ENCODE measurements at regions of chr10 and their contacts with region 1.

Region 1: DNA sequence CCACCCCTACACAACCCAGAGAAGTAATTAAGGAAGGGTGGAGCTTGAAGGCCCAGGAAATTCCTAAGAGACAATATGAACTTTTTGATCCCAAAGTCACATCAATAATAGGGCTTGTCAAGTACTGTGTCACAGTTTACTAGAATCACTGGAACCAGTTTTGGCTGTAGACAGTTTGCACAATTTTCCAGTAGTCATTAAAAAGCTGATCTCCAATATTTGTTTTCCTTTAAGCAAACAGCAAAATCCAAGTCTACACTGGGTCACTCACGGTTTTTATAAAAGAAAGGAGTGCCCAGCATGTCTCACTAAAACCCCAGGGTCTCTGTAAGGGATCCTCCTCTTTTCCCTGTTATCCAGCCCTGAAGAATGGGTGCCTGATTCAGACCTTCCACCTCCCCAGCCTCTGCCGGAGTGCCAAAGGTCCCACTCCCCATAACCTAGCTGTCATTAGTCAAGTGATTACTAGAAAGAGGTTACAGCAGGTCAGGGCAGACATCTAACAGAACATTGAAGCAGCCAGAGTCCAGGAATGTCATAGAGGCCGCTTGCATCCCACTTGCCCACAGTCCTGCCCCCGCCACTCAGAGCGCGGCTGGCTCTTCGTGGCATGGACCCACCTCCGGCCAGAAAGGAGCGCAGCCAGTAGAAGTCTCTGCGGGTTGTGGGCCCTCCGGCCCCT is 556 bp downstream of the SLC25A16 start:
- DNase-seq: no peak

Region 2: DNA sequence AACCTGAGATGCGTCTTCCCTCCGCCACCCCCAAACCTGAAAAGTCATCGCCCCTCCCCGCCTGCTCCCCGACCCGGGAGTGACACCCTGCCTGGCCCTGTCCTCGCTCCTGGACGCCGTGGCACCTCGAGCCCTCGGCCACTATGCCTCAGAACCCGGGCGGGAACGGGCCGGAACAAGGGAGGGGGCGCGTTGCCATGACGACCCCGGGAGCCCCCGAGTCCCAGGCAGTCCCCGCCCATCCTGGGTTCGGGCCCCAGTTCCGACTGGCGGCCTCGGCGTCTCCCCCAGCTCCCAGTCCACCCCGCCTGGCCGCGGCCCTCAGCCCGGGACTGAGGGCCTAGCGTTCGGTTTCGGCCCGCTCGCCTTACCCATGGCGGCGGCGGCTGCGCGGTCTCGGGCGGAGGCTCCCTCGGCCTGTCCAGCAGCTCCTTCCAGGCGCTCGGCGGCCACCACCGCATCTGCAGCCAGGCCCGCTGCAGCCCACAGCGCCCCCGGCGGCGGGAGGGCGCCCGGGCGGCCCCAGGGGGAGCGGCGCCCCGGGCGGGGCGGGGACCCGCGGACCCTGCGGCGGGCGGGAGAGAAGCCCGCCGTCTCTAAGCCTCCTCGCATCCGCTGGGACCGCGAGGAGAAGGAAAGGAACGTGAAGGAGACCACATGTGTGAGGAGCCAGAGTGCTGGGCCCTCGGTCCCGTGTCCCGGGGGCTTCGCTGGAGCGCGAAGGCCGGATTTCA is 119.8 kb before region 1 on chr10 and contains the start of gene RUFY2:
- intact Hi-C with region 1: loop called (anchors 2 kb)
- DNase-seq: peak; percentile 62 to 97 (median 78)

Region 3: DNA sequence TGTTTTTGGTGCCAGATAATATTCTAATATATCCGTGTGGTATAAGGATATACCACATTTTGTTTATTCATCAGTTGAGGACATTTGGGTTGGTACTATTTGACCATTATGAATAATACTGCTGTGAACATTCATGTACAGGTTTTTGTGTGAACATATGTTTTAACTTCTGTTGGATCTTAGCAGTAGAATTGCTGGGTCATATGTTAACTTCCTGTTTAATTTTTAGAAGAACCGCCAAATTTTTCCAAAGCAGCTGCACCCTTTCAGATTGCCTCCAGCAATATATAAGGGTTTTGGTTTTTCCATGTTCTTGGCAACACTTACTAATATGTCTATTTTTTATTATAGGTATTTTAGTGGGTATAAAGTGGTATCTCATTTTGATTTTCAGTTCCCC is 620.0 kb after region 1 on chr10:
- intact Hi-C with region 1: no loop called
- DNase-seq: no peak

Measured in posterior cingulate gyrus (tissue), 11 donors.